Prostate gland (tissue), 2 donors: ENCODE measurements at regions of chr1 and their contacts with region 1.

Region 1: GRCh38 chr1:10530281-10530740 is 55.6 kb downstream of the PEX14 start:
- DNase-seq: peak; percentile 64
- H3K4me3 ChIP-seq: no peak overlapping the region
- H3K27ac ChIP-seq: peak overlapping the region; percentile 41 to 52
- H3K4me1 ChIP-seq: peaks cover 5% of the 10 kb centered on the region
- H3K27me3 ChIP-seq: no peaks in the 10 kb centered on the region
- CTCF ChIP-seq: peak; percentile 36 to 87 (median 66)
- POLR2A ChIP-seq: no peak

Region 2: DNA sequence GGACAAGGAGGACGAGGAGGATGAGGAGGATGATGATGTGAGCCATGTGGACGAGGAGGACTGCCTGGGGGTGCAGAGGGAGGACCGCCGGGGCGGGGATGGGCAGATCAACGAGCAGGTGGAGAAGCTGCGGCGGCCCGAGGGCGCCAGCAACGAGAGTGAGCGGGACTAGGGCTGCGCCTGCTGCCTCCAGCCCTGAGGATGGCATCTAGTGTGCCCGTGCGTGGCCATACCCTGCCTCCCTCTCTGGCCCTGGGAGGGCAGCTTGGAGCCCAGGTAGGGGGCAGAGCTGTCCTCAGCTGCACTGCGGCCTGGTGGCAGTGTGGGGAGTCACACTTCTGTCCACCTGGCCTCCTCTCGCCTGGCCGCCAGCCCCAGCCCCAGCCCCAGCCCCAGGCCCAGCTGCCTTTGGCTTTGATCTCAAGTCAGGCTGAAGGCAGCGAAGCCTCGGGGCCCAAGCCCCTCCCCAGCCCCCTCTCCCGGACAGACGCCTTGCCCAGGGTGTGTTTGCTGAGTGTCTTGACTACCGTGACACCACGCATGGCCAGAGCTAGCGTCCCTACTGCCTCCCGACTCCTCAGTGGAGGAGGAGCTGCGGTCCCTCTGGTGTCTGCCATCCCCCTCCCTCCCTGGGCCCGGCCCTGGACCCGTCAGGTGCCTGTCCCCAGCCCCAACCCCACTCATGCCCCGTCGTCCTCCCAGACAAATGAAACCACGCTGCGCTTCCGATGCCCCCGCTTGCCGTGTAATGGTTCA is 99.7 kb after region 1 on chr1:
- intact Hi-C with region 1: no loop called
- DNase-seq: no peak
- H3K4me3 ChIP-seq: no peak overlapping the region
- H3K27ac ChIP-seq: peak overlapping the region; percentile 95 to 98
- H3K4me1 ChIP-seq: peaks cover 39% of the 10 kb centered on the region
- H3K27me3 ChIP-seq: no peaks in the 10 kb centered on the region
- CTCF ChIP-seq: no peak
- POLR2A ChIP-seq: no peak

Region 3: DNA sequence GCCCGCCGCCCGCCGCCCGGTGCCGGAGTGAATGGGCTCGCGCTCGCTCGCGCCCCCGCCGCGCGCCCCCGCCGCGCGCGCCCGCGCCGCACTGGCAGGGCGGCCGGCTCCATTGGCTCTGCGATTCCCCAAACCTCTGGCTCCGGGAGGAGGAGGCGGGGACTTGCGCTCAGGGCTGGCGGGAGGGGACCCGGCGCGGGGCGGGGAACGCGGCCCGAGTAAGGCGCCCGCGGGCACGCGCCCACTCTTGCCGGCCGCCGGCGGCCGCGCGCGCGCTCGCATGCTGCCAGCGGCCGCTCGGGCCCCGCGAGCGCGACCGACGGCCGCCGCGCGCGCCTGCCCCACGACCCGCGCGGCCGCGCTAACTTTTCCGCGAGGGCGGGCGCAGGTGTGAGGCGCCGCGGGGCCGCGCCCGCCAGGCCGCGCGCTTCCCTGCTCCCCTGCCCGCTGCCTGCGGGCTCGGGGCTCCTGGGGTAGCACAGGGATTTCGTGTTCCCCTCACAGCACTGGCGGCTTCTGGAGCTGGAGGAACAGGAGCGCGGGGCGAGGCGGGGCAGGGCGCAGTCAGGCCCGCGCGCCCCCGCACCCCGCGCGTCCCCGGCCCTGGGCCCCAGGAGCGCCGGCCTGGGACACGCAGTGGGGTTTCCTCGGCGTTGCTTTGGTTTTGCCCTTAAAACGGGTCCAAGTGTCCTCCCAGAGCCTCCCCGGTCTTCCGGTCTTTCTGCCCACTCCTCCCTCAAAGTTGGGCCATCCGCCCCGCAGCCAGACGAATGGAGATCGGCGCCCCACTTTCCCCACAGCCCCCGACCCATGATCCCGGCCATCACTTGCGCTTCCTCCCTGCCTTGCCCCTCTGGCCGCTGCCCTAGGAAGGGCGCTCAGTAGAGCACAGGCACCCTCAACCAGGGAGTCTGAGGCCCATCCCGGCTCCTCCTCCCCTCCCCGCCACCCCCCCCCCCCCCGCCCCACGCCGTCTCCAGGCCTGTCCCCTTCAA is 164.6 kb after region 1 on chr1:
- intact Hi-C with region 1: loop called (anchors 5 kb)
- DNase-seq: peak; percentile 91
- H3K4me3 ChIP-seq: peak overlapping the region; percentile 43 to 67
- H3K27ac ChIP-seq: peak overlapping the region; percentile 91 to 94
- H3K4me1 ChIP-seq: peaks cover 40% of the 10 kb centered on the region
- H3K27me3 ChIP-seq: no peaks in the 10 kb centered on the region
- CTCF ChIP-seq: peak in 1 of 4 experiments; percentile 5
- POLR2A ChIP-seq: no peak

Region 4: GRCh38 chr1:10724948-10725847 is 194.9 kb after region 1 on chr1:
- intact Hi-C with region 1: no loop called
- DNase-seq: peak; percentile 54
- H3K4me3 ChIP-seq: no peak overlapping the region
- H3K27ac ChIP-seq: peak overlapping the region; percentile 85 to 89
- H3K4me1 ChIP-seq: peaks cover 65% of the 10 kb centered on the region
- H3K27me3 ChIP-seq: no peaks in the 10 kb centered on the region
- CTCF ChIP-seq: no peak
- POLR2A ChIP-seq: no peak

Region 5: GRCh38 chr1:10796019-10796944 is 266.0 kb after region 1 on chr1 and contains the start of gene CASZ1:
- intact Hi-C with region 1: loop called (anchors 2 kb)
- DNase-seq: peak; percentile 89
- H3K4me3 ChIP-seq: peak within 1 kb of the TSS; percentile 68 to 85
- H3K27ac ChIP-seq: peak within 1 kb of the TSS; percentile 92 to 96
- H3K4me1 ChIP-seq: peaks cover 7% of the 10 kb centered on the region
- H3K27me3 ChIP-seq: no peaks in the 10 kb centered on the region
- CTCF ChIP-seq: peak in 2 of 4 experiments; percentile 22 to 40
- POLR2A ChIP-seq: peak; percentile 85
- total RNA-seq, gene CASZ1: 90.9 to 96.9 TPM